Activated CD8-positive, alpha-beta T cell treated with anti-CD3 and anti-CD28 coated beads, Interleukin-2, amount 10 ng/mL, durations not matched to agents 7 days and 5 days (primary cell): ENCODE measurements at regions of chr10 and their contacts with region 1.

Region 1: DNA sequence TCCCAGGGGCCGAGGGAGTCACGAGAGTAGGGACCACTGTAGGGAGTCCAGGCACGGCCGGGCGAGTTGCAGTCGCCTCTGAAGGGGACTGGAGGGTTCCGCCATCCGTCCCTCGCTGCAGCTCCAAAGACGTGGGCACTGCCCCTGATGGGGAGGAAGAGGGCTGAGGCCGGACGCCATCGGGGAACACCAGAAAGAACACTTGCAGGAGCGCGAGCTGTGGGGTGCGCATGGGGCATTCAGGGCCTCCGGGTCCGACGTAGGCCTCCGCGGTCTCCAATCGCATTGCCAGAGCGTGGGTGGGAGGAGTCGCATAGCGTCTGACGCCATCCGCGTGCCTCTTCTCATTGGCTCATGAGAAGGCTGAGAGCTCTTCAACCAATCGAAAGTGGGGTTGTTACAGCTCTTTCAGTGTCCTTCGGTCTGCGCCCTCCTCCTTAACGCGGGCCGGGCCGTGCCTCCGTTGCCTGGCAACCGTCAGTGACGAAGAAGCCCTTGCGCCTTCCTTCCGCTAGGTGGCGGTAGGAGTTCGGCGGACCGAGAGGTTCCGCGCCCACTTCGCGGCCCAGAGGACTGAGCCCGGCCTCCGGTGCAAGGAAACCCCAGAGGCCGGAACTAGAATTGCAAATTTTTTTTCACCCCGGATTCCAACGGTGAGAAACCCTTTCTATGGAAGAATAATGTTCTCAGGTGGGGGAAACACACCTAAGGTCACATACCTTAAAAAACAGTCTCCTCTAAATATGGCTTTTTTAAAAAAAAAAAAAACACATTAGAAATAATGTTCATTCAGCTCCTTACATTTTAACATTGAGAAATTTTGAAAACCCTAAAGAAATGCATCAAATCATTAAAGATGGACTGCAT is at the start of gene TCTN3:
- DNase-seq: peak; percentile 98
- ATAC-seq: peak; percentile 99
- H3K4me3 Mint-ChIP-seq: peak within 1 kb of the TSS; percentile 95
- H3K27ac Mint-ChIP-seq: peak within 1 kb of the TSS; percentile 91
- H3K4me1 Mint-ChIP-seq: peaks cover 34% of the 10 kb centered on the region
- H3K27me3 Mint-ChIP-seq: no peaks in the 10 kb centered on the region
- total RNA-seq, gene TCTN3: 19.5 to 20.4 TPM

Region 2: DNA sequence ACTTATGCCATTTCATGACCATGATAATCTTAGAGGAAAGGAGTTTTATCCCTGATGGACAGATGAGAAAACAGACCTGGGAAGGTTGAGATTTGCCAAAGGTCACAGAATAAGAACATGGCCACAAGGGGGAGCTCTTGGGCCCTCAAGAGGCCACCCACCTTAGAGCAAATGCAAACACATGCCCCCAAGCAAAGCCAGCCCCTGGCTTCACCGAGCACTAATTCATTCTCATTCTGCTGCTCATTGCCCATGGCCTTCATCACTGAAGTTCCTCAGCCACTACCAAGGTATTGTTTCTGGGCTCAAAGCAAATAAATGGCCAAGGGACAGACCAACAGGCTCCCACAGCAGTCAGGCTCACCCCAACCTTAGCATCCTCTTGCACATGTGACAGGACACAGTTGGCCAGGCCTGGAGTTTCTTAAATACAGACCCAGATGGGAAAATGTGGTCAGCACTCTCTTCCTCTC is 447.3 kb before region 1 on chr10:
- CTCF ChIA-PET with region 1: no interaction called
- POLR2A ChIA-PET with region 1: no interaction called
- DNase-seq: peak; percentile 81
- ATAC-seq: peak; percentile 84
- H3K4me3 Mint-ChIP-seq: no peak overlapping the region
- H3K27ac Mint-ChIP-seq: no peak overlapping the region
- H3K4me1 Mint-ChIP-seq: peaks cover 17% of the 10 kb centered on the region
- H3K27me3 Mint-ChIP-seq: no peaks in the 10 kb centered on the region

Region 3: DNA sequence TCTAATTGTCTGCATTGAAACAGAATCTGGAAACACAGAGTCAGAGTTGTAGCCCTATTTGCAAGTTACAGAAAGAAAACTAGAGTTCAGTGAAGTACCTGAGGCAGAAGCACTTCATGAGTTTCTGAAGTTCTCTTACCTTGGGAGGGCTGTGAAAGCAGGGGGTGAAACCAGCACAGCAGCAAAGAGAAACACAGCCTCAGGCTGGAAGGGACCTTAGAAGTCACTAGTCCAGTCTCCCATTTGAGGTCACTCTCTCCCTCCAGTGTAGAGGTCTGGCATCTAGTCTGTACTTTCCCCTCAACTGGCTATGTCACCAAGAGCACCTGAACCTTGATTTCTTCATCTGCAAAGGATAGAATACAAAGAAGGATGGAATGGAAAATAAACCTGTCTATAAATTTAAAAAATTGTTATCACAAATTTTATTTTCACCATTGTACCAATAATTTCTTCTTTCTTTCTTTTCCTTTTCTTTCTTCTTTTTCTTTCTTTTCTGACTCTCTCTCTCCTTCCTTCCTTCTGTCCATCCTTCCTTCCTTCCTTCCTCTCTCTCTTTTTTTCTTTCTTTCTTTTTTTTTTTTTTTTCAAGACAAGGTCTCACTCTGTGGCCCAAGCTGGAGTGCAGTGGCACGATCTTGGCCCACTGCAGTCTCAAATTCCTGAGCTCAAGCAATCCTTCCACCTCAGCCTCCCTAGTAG is 96.3 kb before region 1 on chr10:
- CTCF ChIA-PET with region 1: no interaction called
- POLR2A ChIA-PET with region 1: no interaction called
- DNase-seq: no peak
- ATAC-seq: no peak
- H3K4me3 Mint-ChIP-seq: no peak overlapping the region
- H3K27ac Mint-ChIP-seq: no peak overlapping the region
- H3K4me1 Mint-ChIP-seq: no peaks in the 10 kb centered on the region
- H3K27me3 Mint-ChIP-seq: peaks cover 17% of the 10 kb centered on the region

Region 4: GRCh38 chr10:95706986-95707385 is 13.1 kb after region 1 on chr10:
- CTCF ChIA-PET with region 1: interaction called, 58 read pairs
- POLR2A ChIA-PET with region 1: no interaction called
- DNase-seq: no peak
- ATAC-seq: no peak
- H3K4me3 Mint-ChIP-seq: no peak overlapping the region
- H3K27ac Mint-ChIP-seq: no peak overlapping the region
- H3K4me1 Mint-ChIP-seq: peaks cover 4% of the 10 kb centered on the region
- H3K27me3 Mint-ChIP-seq: no peaks in the 10 kb centered on the region

Region 5: DNA sequence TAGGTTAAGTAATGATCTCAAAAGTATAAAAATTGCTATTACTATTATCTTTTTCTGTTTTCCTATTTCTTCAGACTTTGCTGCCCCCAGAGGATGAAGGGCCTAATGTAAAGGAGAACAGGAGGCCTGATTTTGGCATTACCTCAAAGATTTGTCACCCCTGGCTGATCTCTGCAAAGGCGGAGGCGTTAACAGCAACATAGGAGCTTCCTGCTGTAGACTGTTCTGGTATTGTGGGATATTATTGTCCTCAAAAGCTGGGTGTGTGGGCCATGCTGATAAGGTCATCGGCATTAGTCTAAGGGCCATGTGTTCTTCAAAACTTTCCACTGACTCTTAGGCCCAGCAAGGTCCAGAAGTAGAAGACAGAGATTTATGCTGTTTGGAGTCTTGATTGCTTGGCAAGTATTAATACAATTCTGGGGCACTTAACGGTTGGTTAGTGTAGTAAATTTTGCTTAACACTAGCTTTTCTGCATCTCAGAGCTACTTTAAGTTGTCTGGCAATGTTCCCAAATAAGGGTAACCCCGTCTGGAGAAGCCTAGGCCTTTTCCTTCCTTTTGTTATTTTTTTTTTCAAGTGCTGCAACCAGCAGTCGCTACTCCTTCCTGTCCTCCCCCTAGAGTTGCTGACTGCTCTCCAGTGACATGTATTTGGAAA is 48.0 kb after region 1 on chr10:
- CTCF ChIA-PET with region 1: interaction called, 40 read pairs
- POLR2A ChIA-PET with region 1: no interaction called
- DNase-seq: no peak
- ATAC-seq: no peak
- H3K4me3 Mint-ChIP-seq: no peak overlapping the region
- H3K27ac Mint-ChIP-seq: no peak overlapping the region
- H3K4me1 Mint-ChIP-seq: peaks cover 29% of the 10 kb centered on the region
- H3K27me3 Mint-ChIP-seq: peaks cover 2% of the 10 kb centered on the region

Region 6: DNA sequence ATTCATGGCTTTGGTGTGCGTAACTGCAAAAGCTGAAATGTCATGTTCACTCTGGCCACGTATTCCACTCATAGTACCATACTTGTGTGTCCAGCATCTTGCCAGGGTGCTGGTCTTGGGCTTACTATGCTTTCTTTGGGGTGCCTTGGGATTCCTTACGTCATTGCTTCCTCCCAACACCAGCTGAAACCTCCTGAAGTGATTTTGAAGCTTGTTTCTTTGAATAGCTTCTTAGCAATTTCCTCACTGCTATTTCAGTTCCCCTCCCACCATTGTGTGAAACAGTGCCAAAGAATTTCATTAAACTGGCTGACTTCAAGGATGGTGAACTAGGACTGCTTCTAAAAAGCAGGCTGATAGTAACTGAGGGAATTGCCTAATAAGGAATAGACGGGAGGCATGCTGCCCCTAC is 99.0 kb after region 1 on chr10:
- CTCF ChIA-PET with region 1: interaction called, 32 read pairs
- POLR2A ChIA-PET with region 1: interaction called, 5 read pairs
- DNase-seq: no peak
- ATAC-seq: no peak
- H3K4me3 Mint-ChIP-seq: no peak overlapping the region
- H3K27ac Mint-ChIP-seq: peak overlapping the region; percentile 86
- H3K4me1 Mint-ChIP-seq: peaks cover 80% of the 10 kb centered on the region
- H3K27me3 Mint-ChIP-seq: peaks cover 3% of the 10 kb centered on the region

Region 7: GRCh38 chr10:95864906-95865813 is 171.3 kb after region 1 on chr10:
- CTCF ChIA-PET with region 1: interaction called, 249 read pairs
- POLR2A ChIA-PET with region 1: interaction called, 31 read pairs
- DNase-seq: peak; percentile 72
- ATAC-seq: peak; percentile 90
- H3K4me3 Mint-ChIP-seq: no peak overlapping the region
- H3K27ac Mint-ChIP-seq: peak overlapping the region; percentile 74
- H3K4me1 Mint-ChIP-seq: peaks cover 36% of the 10 kb centered on the region
- H3K27me3 Mint-ChIP-seq: no peaks in the 10 kb centered on the region

Region 8: GRCh38 chr10:95896071-95896846 is 202.4 kb after region 1 on chr10:
- CTCF ChIA-PET with region 1: interaction called, 19 read pairs
- POLR2A ChIA-PET with region 1: no interaction called
- DNase-seq: no peak
- ATAC-seq: no peak
- H3K4me3 Mint-ChIP-seq: no peak overlapping the region
- H3K27ac Mint-ChIP-seq: no peak overlapping the region
- H3K4me1 Mint-ChIP-seq: no peaks in the 10 kb centered on the region
- H3K27me3 Mint-ChIP-seq: no peaks in the 10 kb centered on the region